Transverse colon (tissue), 4 donors: ENCODE measurements at regions of chr10 and their contacts with region 1.

Region 1: GRCh38 chr10:6678211-6678803 is 98.2 kb upstream of the PRKCQ start:
- DNase-seq: peak; percentile 55
- H3K4me3 ChIP-seq: no peak overlapping the region
- H3K27ac ChIP-seq: no peak overlapping the region
- H3K4me1 ChIP-seq: no peaks in the 10 kb centered on the region
- H3K27me3 ChIP-seq: peaks cover 13% of the 10 kb centered on the region
- CTCF ChIP-seq: peak; percentile 54 to 67 (median 65)
- EP300 ChIP-seq: no peak
- POLR2A ChIP-seq: no peak

Region 2: DNA sequence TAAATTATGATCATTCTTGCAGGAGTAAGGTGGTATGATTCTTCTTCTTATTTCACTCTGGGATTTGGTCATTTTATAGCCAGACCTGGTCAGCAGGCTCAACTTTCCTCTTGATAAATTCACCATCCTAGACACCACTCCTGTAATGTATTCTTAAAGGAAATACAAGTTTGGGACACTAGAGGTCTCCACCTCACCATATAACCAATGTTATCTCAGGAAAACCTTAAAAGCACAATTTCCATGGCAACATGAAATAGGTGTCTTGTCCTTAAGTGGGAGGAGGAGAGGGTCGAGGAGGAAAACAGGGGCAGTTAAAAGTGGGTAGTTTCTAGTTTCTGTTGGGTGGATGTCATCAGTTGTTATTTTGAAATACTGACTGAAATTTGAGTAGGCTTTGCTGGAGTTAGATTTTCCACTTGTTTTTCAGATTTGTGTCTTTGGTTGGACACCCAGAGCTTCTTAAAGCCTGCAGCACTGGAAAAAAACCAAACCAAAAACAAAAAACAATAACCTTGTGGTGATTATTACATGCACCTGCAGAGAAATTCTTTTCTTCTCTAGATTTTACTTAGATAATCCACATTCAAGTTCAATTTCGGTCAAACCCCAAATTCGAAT is 261.3 kb before region 1 on chr10:
- in situ Hi-C with region 1: loop called in 3 of 4 experiments (anchors 10 to 25 kb)
- intact Hi-C with region 1: no loop called
- DNase-seq: no peak
- H3K4me3 ChIP-seq: no peak overlapping the region
- H3K27ac ChIP-seq: no peak overlapping the region
- H3K4me1 ChIP-seq: no peaks in the 10 kb centered on the region
- H3K27me3 ChIP-seq: no peaks in the 10 kb centered on the region
- CTCF ChIP-seq: peak; percentile 54 to 70 (median 59)
- EP300 ChIP-seq: no peak
- POLR2A ChIP-seq: no peak

Region 3: DNA sequence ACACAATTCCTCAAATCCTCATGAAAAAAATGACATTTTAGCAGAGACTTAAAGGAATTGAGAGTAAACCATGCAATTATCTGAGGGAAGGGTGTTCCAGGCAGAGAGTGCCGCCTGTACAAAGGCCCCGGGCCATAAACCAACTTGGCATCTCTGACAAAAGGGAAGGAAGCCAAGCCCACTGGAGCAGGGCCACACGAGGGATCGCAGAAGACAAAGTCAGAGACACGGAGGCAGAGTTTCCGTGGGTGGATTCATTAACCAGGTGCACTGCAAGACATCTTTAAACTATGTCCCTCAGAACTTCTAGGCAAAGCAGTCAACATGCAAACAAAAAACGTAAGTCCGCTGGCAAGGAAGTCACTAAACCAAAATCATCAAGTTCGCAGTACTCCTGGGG is 640.5 kb after region 1 on chr10:
- in situ Hi-C with region 1: no loop called
- intact Hi-C with region 1: no loop called
- DNase-seq: no peak
- H3K4me3 ChIP-seq: no peak overlapping the region
- H3K27ac ChIP-seq: no peak overlapping the region
- H3K4me1 ChIP-seq: peaks cover 4 to 16% (median 10%) of the 10 kb centered on the region in 4 donors
- H3K27me3 ChIP-seq: no peaks in the 10 kb centered on the region
- CTCF ChIP-seq: no peak
- EP300 ChIP-seq: no peak
- POLR2A ChIP-seq: no peak